MCF 10A (cell line): ENCODE measurements at regions of chr1 and their contacts with region 1.

Region 1: DNA sequence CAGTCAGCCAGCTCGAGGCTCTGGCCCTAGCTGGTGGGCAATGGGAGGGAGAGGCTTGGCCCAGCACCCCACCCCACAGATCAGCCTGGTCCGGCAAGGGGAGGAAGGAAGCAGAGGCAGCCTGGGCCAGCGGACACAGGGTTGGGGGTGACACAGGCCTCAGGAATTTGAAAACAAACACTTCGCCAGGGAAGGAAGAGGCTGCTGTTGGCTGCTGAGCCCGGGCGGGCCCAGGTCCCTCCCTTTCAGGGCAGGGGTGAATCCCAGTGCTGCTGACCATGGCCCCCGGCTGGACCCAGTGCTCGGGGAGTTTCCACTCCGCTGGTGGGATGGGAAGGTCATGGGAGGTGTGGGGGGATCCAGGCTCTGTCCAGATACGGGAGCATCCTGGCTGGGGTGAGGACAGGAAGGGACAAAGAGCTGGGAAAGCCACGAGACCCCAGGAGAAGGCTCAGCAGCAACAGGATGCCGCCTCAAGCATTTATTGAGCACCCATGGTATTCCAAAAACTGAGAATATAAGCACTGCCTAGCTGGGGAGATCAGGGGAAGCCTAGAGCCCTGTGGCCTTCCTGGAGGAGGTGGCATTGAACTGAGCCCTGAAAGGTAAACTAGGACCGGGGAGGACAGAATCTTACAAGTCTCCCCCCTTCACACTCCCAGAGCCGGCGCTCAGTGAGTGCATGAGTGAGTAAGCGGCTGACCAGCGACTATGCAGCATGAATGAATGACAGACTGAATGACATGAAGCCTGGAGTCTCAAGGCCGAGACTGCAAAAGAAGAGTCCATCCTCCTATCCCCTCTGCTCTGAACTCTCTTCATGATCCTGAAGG is 26.2 kb upstream of the EPHA2 start:
- DNase-seq: peak; percentile 91
- H3K4me3 Mint-ChIP-seq: peak overlapping the region; percentile 69
- H3K27ac Mint-ChIP-seq: peak overlapping the region; percentile 98
- H3K4me1 Mint-ChIP-seq: peaks cover 44% of the 10 kb centered on the region
- H3K27me3 Mint-ChIP-seq: no peaks in the 10 kb centered on the region
- CTCF ChIP-seq: no peak

Region 2: GRCh38 chr1:15786581-15786980 is 395.5 kb before region 1 on chr1:
- CTCF ChIA-PET with region 1: no interaction called
- POLR2A ChIA-PET with region 1: no interaction called
- intact Hi-C with region 1: no loop called
- DNase-seq: peak; percentile 68
- H3K4me3 Mint-ChIP-seq: no peak overlapping the region
- H3K27ac Mint-ChIP-seq: peak overlapping the region; percentile 51
- H3K4me1 Mint-ChIP-seq: peaks cover 15% of the 10 kb centered on the region
- H3K27me3 Mint-ChIP-seq: no peaks in the 10 kb centered on the region
- CTCF ChIP-seq: no peak

Region 3: GRCh38 chr1:16139473-16139962 is 42.6 kb before region 1 on chr1:
- CTCF ChIA-PET with region 1: interaction called, 4 read pairs
- POLR2A ChIA-PET with region 1: interaction called, 63 read pairs
- intact Hi-C with region 1: no loop called
- DNase-seq: peak; percentile 94
- H3K4me3 Mint-ChIP-seq: peak overlapping the region; percentile 26
- H3K27ac Mint-ChIP-seq: peak overlapping the region; percentile 63
- H3K4me1 Mint-ChIP-seq: peaks cover 53% of the 10 kb centered on the region
- H3K27me3 Mint-ChIP-seq: no peaks in the 10 kb centered on the region
- CTCF ChIP-seq: no peak

Region 4: GRCh38 chr1:16146279-16147155 is 35.6 kb before region 1 on chr1:
- CTCF ChIA-PET with region 1: interaction called, 6 read pairs
- POLR2A ChIA-PET with region 1: interaction called, 63 read pairs
- intact Hi-C with region 1: loop called (anchors 5 kb)
- DNase-seq: peak; percentile 80
- H3K4me3 Mint-ChIP-seq: peak overlapping the region; percentile 69
- H3K27ac Mint-ChIP-seq: peak overlapping the region; percentile 53
- H3K4me1 Mint-ChIP-seq: peaks cover 57% of the 10 kb centered on the region
- H3K27me3 Mint-ChIP-seq: no peaks in the 10 kb centered on the region
- CTCF ChIP-seq: no peak

Region 5: DNA sequence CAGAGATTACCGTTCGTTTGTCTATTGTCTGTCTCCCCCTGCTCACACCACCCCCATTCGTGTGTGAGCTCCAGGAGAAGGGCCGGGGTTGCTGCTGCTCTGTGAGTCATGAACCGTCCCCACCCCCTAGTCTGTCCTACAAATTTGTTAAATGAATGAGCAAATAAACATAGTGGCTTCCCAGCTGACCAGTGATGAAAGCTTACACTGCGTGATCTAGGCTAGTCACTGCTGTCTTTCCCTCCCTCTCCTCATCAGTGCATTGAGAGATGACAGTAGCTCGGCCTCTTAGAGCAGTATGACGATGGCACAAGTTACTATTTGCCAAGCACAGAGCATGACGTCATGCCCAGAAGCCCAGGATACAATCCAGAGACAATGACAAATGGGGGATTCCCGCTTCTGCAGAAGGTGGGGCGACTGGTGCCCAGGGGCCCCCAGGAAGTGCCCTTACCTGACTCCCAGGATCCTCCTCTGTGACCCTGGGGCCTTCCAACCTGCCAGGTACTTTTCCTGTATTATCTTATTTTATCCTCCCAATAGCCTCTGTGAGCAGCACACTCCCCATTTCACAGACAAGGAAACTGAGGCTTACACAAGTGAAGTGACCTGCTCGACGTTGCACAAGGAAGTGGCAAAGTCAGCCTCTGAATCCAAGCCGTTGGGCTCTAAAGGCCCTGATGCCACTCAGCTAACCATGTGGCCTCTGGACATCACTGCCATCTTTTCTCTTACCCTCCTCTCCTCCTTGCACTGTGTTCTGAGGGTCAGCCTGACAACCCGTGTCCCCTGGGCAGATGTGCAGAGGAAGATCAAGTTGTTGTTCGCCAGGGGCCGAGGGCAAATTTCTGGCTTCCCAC is 17.7 kb before region 1 on chr1:
- CTCF ChIA-PET with region 1: interaction called, 4 read pairs
- POLR2A ChIA-PET with region 1: interaction called, 27 read pairs
- intact Hi-C with region 1: no loop called
- DNase-seq: peak; percentile 91
- H3K4me3 Mint-ChIP-seq: no peak overlapping the region
- H3K27ac Mint-ChIP-seq: peak overlapping the region; percentile 57
- H3K4me1 Mint-ChIP-seq: peaks cover 22% of the 10 kb centered on the region
- H3K27me3 Mint-ChIP-seq: no peaks in the 10 kb centered on the region
- CTCF ChIP-seq: no peak

Region 6: DNA sequence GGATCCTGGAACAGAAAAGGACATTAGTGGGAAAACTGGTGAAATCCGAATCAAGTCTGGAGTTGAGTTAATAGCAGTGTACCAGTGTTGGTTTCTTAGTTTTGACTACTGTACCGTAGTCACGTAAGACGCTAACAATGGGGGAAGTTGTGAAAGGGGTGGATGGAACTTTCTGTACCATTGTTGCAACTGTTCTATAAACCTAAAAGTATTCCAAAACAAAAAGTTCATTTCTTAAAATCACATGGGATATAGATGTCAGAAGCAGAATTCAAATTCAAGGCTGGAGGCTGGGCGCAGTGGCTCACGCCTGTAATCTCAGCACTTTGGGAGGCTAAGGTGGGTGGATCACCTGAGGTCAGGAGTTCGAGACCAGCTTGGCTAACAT is 13.4 kb after region 1 on chr1:
- CTCF ChIA-PET with region 1: no interaction called
- POLR2A ChIA-PET with region 1: no interaction called
- intact Hi-C with region 1: no loop called
- DNase-seq: no peak
- H3K4me3 Mint-ChIP-seq: no peak overlapping the region
- H3K27ac Mint-ChIP-seq: no peak overlapping the region
- H3K4me1 Mint-ChIP-seq: no peaks in the 10 kb centered on the region
- H3K27me3 Mint-ChIP-seq: no peaks in the 10 kb centered on the region
- CTCF ChIP-seq: no peak